Ovary (tissue), 10 donors: ENCODE measurements at regions of chr10 and their contacts with region 1.

Region 1: GRCh38 chr10:99895867-99896266 is 113.4 kb downstream of the ABCC2 start:
- DNase-seq: no peak
- H3K4me3 ChIP-seq: no peak overlapping the region
- H3K27ac ChIP-seq: no peak overlapping the region
- H3K4me1 ChIP-seq: no peaks in the 10 kb centered on the region
- H3K27me3 ChIP-seq: no peaks in the 10 kb centered on the region
- CTCF ChIP-seq: no peak
- EP300 ChIP-seq: no peak
- POLR2A ChIP-seq: no peak

Region 2: DNA sequence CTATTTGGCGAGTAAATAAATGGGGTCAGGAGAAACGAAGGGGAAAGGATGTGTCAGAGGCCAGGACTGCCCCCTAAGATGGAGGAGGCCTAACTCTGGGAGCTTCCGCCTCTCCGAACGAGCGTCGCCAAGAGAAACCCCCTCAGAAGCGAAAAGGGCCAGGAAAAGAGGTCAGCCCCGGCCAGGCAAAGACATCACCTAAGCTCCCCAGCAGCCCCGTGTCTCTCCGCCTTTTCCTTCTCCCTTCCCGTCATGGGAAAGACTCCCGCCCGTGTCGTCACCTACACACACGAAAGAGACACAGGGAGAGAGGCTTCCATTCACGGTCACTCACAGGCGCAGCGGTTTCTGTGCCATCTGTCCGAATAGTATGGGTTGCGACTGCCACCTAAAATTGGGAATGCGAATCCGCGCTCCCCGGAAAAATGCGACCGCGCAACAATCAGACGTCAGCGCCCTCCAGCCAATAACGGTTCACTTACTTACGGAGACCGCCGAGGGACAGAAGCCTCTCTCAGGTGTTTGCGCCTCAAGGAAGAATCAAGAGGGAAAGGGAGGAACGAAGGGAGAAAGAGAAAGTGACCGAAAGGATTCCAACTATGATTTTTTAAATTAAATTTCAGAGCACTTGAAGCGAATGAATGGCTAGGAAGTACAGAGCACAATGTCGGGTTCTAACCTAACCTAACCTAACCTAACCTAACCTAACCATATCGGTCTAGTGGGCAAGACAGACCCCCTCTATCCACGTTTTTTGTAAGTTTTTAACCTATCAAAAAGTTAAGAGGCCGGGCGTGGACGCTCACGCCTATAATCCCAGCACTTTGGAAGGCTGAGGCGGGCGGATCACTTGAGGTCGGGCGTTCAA is 371.6 kb after region 1 on chr10 and contains the start of gene CWF19L1:
- intact Hi-C with region 1: loop called in 1 of 4 experiments (anchors 5 kb)
- DNase-seq: peak; percentile 82 to 91 (median 85)
- H3K4me3 ChIP-seq: peak within 1 kb of the TSS; percentile 50
- H3K27ac ChIP-seq: peak within 1 kb of the TSS in 1 of 2 donors; percentile 45
- H3K4me1 ChIP-seq: peaks cover 4% of the 10 kb centered on the region
- H3K27me3 ChIP-seq: no peaks in the 10 kb centered on the region
- CTCF ChIP-seq: peak in 1 of 3 donors; percentile 14
- EP300 ChIP-seq: no peak
- POLR2A ChIP-seq: peak; percentile 54
- total RNA-seq, gene CWF19L1: 17.1 to 24.6 (median 20.5) TPM